ENCODE measurements at regions of chr2 and their contacts with region 1.

Region 1: DNA sequence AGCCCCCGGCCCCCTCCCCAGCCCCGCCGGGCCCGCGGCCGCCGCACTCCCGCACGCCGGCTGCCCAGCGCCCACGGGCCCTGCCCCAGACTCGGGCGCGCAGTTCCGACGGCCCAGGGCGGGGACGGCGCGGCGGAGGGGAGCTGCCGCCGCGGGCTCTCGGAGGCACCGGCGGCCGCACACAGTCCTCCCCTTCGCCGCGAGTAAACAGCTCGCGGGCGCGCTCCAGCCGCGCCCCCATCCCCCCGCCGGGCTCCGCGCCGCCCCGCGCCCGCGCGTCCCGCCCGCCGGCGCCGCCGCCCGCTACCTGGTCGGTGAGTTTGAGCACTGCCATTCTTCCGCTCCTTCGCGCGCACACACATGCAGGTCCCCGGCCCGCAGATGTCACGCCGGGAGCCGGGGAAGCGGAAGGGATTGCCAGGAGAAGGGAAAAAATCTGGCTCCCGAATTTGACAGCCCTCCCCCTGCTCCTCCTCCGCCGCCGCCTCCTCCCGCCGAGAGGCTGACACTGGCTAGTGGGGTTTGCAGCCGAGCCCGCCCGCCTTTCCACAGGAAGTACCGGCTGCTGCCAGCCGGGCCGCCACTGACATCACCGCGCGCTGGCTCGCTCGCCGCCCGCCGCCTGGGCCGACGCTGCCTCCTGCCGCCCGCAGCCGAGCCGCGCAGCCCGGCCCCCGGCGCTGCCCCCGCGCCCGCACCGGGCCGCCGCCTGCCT is at the start of gene ANKRD44:
- DNase-seq: peak; percentile 82
- ATAC-seq: peak; percentile 77
- H3K4me3 Mint-ChIP-seq: peak within 1 kb of the TSS; percentile 95
- H3K27ac Mint-ChIP-seq: peak within 1 kb of the TSS; percentile 95
- H3K4me1 Mint-ChIP-seq: peaks cover 48% of the 10 kb centered on the region
- H3K27me3 Mint-ChIP-seq: no peaks in the 10 kb centered on the region
- CTCF ChIP-seq: no peak
- total RNA-seq, gene ANKRD44: 154 and 185 TPM in 2 replicates

Region 2: GRCh38 chr2:197145471-197146138 is 164.8 kb before region 1 on chr2:
- CTCF ChIA-PET with region 1: interaction called, 3 read pairs
- POLR2A ChIA-PET with region 1: interaction called, 22 read pairs
- intact Hi-C with region 1: loop called (anchors 2 kb)
- DNase-seq: no peak
- ATAC-seq: peak; percentile 91
- H3K4me3 Mint-ChIP-seq: peak overlapping the region; percentile 67
- H3K27ac Mint-ChIP-seq: peak overlapping the region; percentile 97
- H3K4me1 Mint-ChIP-seq: peaks cover 91% of the 10 kb centered on the region
- H3K27me3 Mint-ChIP-seq: no peaks in the 10 kb centered on the region
- CTCF ChIP-seq: no peak

Region 3: GRCh38 chr2:197191177-197191939 is 119.1 kb before region 1 on chr2:
- CTCF ChIA-PET with region 1: interaction called, 110 read pairs
- POLR2A ChIA-PET with region 1: interaction called, 134 read pairs
- intact Hi-C with region 1: loop called (anchors 1 kb)
- DNase-seq: no peak
- ATAC-seq: peak; percentile 70
- H3K4me3 Mint-ChIP-seq: no peak overlapping the region
- H3K27ac Mint-ChIP-seq: peak overlapping the region; percentile 79
- H3K4me1 Mint-ChIP-seq: peaks cover 67% of the 10 kb centered on the region
- H3K27me3 Mint-ChIP-seq: no peaks in the 10 kb centered on the region
- CTCF ChIP-seq: peak; percentile 68

Region 4: GRCh38 chr2:197216361-197216979 is 94.0 kb before region 1 on chr2:
- CTCF ChIA-PET with region 1: interaction called, 12 read pairs
- POLR2A ChIA-PET with region 1: interaction called, 50 read pairs
- intact Hi-C with region 1: loop called (anchors 1 kb)
- DNase-seq: no peak
- ATAC-seq: peak; percentile 71
- H3K4me3 Mint-ChIP-seq: peak overlapping the region; percentile 72
- H3K27ac Mint-ChIP-seq: peak overlapping the region; percentile 98
- H3K4me1 Mint-ChIP-seq: peaks cover 91% of the 10 kb centered on the region
- H3K27me3 Mint-ChIP-seq: no peaks in the 10 kb centered on the region
- CTCF ChIP-seq: no peak

Region 5: DNA sequence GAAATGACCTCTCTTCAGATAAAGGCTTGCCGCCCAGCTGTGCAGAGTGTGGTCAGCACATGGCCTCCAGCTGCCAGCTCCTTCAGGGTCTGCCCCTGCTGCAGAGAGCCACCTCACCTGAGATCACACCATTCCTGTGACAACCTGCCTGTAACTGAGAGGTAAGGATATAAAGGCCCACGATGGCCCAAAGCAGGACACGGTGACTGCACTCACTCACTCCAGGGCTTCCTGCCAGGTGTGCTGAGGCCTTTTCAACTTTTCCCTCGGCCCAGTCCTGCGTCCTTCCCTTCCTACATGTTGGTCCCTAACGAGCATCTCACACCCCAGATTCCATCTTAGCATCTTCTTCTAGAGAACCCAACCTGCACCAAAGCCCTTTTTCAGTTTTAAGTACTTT is 36.1 kb before region 1 on chr2:
- CTCF ChIA-PET with region 1: interaction called, 3 read pairs
- POLR2A ChIA-PET with region 1: interaction called, 3 read pairs
- intact Hi-C with region 1: loop called (anchors 1 kb)
- DNase-seq: no peak
- ATAC-seq: peak; percentile 51
- H3K4me3 Mint-ChIP-seq: peak overlapping the region; percentile 25
- H3K27ac Mint-ChIP-seq: peak overlapping the region; percentile 78
- H3K4me1 Mint-ChIP-seq: peaks cover 86% of the 10 kb centered on the region
- H3K27me3 Mint-ChIP-seq: no peaks in the 10 kb centered on the region
- CTCF ChIP-seq: no peak

Region 6: GRCh38 chr2:197328461-197328860 is 18.0 kb after region 1 on chr2:
- CTCF ChIA-PET with region 1: no interaction called
- POLR2A ChIA-PET with region 1: no interaction called
- intact Hi-C with region 1: no loop called
- DNase-seq: no peak
- ATAC-seq: no peak
- H3K4me3 Mint-ChIP-seq: no peak overlapping the region
- H3K27ac Mint-ChIP-seq: no peak overlapping the region
- H3K4me1 Mint-ChIP-seq: peaks cover 42% of the 10 kb centered on the region
- H3K27me3 Mint-ChIP-seq: no peaks in the 10 kb centered on the region
- CTCF ChIP-seq: no peak

Region 7: GRCh38 chr2:197378494-197379307 is 68.3 kb after region 1 on chr2:
- CTCF ChIA-PET with region 1: interaction called, 3 read pairs
- POLR2A ChIA-PET with region 1: interaction called, 3 read pairs
- intact Hi-C with region 1: loop called (anchors 1 kb)
- DNase-seq: peak; percentile 29
- ATAC-seq: peak; percentile 66
- H3K4me3 Mint-ChIP-seq: no peak overlapping the region
- H3K27ac Mint-ChIP-seq: no peak overlapping the region
- H3K4me1 Mint-ChIP-seq: peaks cover 11% of the 10 kb centered on the region
- H3K27me3 Mint-ChIP-seq: no peaks in the 10 kb centered on the region
- CTCF ChIP-seq: peak; percentile 43

Region 8: GRCh38 chr2:197674591-197674990 is 364.2 kb after region 1 on chr2:
- CTCF ChIA-PET with region 1: no interaction called
- POLR2A ChIA-PET with region 1: no interaction called
- intact Hi-C with region 1: no loop called
- DNase-seq: no peak
- ATAC-seq: no peak
- H3K4me3 Mint-ChIP-seq: no peak overlapping the region
- H3K27ac Mint-ChIP-seq: no peak overlapping the region
- H3K4me1 Mint-ChIP-seq: no peaks in the 10 kb centered on the region
- H3K27me3 Mint-ChIP-seq: peaks cover 23% of the 10 kb centered on the region
- CTCF ChIP-seq: no peak

Measured in activated B cell treated with CpG ODN at 0.5 μM for 24 hours (primary cell).